ENCODE measurements at regions of chr11 and their contacts with region 1.

Region 1: DNA sequence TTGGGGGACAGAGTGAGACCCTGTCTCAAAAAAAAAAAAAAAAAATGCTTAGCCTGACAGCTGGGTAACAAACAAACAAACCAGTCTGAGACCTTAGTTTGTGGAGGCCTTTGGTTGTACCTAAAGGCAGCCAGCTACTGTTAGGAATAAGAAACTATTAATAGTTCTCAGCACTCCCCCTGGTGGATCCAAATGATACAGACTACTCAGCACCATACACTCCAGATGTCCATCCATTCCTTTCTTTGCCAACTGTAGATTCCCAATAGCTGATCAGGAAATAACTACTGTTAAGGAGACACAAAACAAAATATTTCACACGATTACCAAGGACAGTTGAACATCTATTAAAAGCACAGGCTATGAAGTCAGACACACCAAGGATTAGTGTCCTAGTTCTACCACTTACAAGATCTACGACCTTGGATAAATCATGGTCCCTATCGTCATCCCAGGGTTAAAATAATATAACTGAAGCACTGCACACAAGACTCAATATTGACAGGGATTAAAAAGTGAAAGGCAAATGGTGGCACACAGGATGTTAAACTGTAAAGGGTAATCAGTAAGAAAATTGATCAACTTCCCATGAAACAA is 17.2 kb downstream of the CLDN25 start:
- DNase-seq: peak; percentile 34
- ATAC-seq: peak; percentile 95
- H3K4me3 ChIP-seq: no peak overlapping the region
- H3K27ac ChIP-seq: no peak overlapping the region
- H3K4me1 ChIP-seq: no peaks in the 10 kb centered on the region
- H3K27me3 ChIP-seq: no peaks in the 10 kb centered on the region
- CTCF ChIP-seq: peak; percentile 50
- POLR2A ChIP-seq: no peak
- RAD21 ChIP-seq: no peak

Region 2: GRCh38 chr11:113781679-113782078 is 15.1 kb before region 1 on chr11:
- CTCF ChIA-PET with region 1: interaction called, 11 read pairs
- POLR2A ChIA-PET with region 1: interaction called, 3 read pairs
- dilution Hi-C with region 1: no loop called
- in situ Hi-C with region 1: no loop called
- intact Hi-C with region 1: no loop called
- DNase-seq: no peak
- ATAC-seq: no peak
- H3K4me3 ChIP-seq: no peak overlapping the region
- H3K27ac ChIP-seq: no peak overlapping the region
- H3K4me1 ChIP-seq: no peaks in the 10 kb centered on the region; the same call in 1 of the 2 replicates
- H3K27me3 ChIP-seq: peaks cover 6% of the 10 kb centered on the region; the same call in 1 of the 2 replicates
- CTCF ChIP-seq: no peak
- POLR2A ChIP-seq: no peak
- RAD21 ChIP-seq: no peak

Measured in IMR-90 (cell line).